Activated CD4-positive, alpha-beta T cell treated with anti-CD3 and anti-CD28 coated beads, Interleukin-2, amount 10 ng/mL, durations not matched to agents 24 days and 14 days (primary cell): ENCODE measurements at regions of chr5 and their contacts with region 1.

Region 1: DNA sequence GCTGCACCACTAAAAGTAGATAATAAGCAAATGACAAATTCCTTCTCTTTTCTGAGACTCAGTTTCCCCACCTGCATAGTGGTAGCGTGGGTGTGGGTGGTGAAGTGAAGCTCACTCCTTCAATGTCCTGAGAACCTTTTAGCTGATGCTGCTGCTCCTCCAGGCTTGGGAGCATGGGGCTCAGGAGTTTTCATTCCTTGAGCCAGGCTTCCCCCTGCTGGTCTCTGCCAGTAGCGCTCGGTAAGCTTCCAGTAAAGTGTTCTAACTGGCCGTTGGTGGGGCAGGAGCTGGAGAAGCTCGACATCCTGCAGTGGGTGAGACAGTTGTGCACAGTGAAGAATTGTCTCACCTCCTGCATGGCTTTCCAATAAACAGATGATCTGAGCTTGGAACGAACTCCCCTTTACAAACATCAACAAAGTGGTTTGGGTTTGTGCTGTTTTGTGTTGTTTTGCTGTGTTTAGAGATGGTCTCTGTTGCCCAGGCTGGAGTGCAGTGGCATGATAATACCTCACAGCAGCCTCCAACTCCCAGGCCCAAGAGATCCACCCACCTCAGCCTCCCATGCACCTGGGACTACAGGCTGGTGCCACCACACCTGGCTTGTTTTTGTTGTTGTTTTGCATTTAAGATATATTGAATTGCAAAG is 34.6 kb downstream of the SPARC start:
- DNase-seq: peak; percentile 88
- H3K4me3 Mint-ChIP-seq: no peak overlapping the region
- H3K27ac Mint-ChIP-seq: no peak overlapping the region
- H3K4me1 Mint-ChIP-seq: no peaks in the 10 kb centered on the region
- H3K27me3 Mint-ChIP-seq: peaks cover 20% of the 10 kb centered on the region

Region 2: DNA sequence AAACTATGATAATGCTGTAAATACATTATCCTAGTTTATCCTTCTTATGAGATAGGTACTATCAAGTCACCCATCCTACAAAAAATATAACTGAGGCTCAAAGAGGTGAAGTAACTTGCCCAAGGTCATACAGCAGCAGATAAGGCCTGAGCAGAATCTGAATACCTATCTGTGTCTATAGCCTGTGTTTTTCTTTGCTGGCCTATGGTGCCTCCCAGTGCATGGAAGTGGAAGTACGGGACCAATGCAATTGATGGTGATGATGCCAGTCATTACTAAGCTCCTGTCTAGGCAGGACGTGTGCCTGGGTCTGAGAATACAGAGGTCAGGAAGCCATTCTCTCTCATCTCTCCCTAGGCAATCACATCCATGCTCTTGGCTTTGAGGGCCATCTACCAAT is 128.8 kb before region 1 on chr5:
- intact Hi-C with region 1: loop called (anchors 1 kb)
- DNase-seq: peak; percentile 81
- H3K4me3 Mint-ChIP-seq: no peak overlapping the region
- H3K27ac Mint-ChIP-seq: no peak overlapping the region
- H3K4me1 Mint-ChIP-seq: no peaks in the 10 kb centered on the region
- H3K27me3 Mint-ChIP-seq: no peaks in the 10 kb centered on the region

Region 3: DNA sequence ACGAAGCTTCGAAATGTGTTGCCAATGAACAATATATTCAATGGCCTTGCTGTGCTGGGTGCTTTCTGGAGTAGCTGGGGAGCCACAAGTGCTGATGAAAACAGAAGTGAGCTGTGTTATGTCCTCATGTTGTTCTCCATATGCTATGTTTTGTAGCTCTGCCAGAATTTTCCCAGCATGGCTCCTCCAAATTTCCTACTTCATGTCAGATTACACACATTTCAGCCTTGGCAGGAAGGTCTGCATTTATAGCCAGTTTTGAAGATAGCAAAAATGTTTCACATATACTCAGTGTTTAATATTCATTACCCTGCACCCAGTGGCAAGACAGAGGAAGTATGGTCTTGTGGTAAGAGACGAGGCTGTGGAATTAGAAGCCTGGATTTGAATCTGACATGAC is 775.6 kb after region 1 on chr5:
- intact Hi-C with region 1: no loop called
- DNase-seq: no peak
- H3K4me3 Mint-ChIP-seq: no peak overlapping the region
- H3K27ac Mint-ChIP-seq: no peak overlapping the region
- H3K4me1 Mint-ChIP-seq: no peaks in the 10 kb centered on the region
- H3K27me3 Mint-ChIP-seq: no peaks in the 10 kb centered on the region